HEK293T (cell line): ENCODE measurements at regions of chr12 and their contacts with region 1.

Region 1: GRCh38 chr12:30754709-30755394 is at the start of gene CAPRIN2:
- DNase-seq: peak; percentile 88

Region 2: DNA sequence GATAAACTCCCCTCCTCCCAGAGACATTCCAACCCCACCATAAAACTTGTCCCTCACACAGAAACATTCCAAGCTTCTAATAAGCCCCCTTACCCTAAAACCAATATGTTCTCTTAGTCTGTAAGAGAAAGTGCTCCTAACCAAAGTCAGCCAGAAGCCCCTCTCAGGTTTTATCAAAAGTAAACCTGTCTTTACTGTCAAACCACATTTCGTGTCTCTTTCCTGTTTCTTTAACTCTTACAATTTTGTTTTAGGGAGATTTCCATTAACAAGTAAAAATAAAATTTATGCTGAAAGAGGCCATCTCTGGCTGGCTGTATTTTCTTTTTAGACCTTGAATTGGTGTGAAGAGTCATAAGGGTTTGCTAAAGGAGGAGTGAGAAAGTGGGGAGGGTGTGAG is 29.7 kb after region 1 on chr12:
- CTCF ChIA-PET with region 1: no interaction called
- POLR2A ChIA-PET with region 1: no interaction called
- DNase-seq: no peak

Region 3: DNA sequence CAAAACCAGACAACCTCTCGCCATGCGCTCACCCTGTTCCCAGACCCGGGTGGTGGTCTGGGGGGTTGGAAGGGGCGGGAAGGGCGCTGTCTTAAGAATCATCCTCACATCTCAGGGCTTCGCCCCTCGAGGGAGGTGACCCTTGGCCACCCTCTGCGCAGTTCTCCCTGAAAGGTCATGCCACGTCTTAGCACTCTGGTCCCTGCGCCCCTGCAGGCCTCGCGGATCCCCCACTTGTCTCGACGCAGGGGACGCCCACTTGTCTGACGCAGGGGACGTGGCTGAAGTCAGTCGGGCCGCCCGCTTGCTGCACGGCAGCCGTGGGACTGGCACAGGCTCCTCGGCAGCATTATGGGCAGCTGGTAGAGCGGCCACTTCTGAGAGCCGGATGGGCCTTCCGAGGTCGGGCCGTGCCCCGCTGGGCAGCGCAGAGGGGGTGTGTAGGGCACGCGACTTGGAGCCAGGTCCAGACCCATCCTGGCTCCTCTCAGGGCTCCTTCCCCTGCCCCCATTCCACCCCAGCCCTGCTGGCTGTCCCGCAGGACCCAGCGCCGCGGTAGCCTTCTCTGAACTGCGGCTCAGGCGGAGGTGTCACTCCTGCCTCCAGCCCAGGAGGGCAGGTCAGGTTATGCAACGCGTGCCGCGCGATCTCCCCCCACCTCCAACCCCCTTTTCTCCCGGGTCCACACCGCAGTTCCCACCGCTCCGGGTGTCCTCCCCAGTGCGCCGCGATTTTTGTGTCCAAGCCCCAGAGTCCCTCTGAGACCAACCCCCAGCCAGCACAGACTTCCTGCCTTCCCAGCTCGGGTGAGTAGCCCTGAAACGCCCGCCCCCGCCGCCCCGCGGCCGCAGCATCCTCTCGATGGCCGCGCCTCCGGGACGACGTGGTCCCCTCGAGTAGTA is 40.8 kb after region 1 on chr12:
- CTCF ChIA-PET with region 1: no interaction called
- POLR2A ChIA-PET with region 1: interaction called, 17 read pairs
- DNase-seq: peak; percentile 68